ENCODE measurements at regions of chr5 and their contacts with region 1.

Region 1: GRCh38 chr5:93236804-93237421 is 344.1 kb downstream of the NR2F1-AS1 start:
- DNase-seq: no peak
- H3K4me3 ChIP-seq: no peak overlapping the region
- H3K27ac ChIP-seq: no peak overlapping the region
- H3K4me1 ChIP-seq: no peaks in the 10 kb centered on the region
- CTCF ChIP-seq: no peak

Region 2: DNA sequence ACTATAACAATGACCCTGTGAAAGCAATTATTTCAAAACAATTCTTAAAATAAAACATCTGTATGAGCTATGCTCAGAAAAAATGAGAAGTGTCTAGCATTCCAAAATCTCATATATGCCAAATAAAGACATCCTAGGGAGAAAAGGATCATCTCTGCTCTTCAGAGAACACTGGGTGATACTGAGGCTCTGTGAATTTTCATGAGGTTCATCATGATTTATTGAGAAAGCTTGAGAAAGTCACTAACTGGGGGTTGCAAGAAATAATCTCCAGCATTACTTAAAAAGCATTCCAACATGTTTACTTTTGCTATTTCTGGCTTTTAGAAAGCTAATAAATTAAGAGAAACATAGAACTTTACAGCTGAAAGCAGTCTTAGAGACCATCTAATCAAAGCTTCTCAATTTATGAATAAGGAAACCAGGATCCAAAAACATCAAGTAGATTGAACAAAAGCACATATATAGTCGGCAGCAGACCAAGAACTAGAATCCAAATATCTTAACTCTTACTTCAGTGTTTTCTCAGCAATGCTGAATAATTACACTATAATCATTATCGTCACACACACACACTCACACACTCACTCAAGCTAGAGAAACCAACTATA is 28.7 kb before region 1 on chr5:
- CTCF ChIA-PET with region 1: no interaction called
- POLR2A ChIA-PET with region 1: interaction called, 10 read pairs
- intact Hi-C with region 1: no loop called
- DNase-seq: no peak
- H3K4me3 ChIP-seq: no peak overlapping the region
- H3K27ac ChIP-seq: no peak overlapping the region
- H3K4me1 ChIP-seq: no peaks in the 10 kb centered on the region
- CTCF ChIP-seq: no peak

Region 3: DNA sequence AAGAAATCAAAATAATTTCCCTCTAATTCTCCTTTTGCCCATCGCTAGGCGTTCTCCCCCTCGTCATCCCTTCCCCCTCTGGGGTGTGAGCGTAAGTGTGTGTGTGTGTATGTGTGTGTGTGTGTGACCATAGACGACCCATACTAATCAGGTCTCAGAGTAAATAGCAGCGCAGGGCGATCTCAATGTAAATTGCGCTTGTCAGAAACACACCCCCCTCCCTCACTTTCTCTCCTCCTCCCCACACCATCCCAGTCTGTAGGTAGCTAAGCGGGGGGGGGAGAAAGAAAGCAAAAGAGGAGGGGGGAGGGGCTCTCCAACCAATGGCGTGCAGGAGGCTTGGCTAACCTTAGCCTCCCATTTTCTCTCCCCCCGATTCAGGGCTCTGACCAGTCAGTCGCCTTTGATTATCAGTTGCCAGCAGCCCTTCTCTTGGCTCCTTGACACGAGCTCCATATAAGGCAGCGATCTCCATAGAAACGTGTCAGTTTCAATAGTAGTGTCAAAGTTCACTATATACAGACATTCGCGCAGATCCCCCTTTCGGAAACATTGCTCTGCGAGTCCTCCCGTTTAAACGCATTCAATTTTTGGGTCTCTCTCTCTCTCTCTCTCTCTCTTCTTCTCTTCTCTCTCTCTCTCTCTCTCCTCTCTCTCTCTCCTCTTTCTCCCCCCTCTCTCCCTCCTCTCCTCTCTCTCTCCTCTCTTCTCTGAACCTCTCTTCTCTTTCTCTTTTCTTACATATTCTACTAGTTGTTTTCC is 345.9 kb after region 1 on chr5 and contains the start of gene NR2F1:
- CTCF ChIA-PET with region 1: no interaction called
- POLR2A ChIA-PET with region 1: no interaction called
- intact Hi-C with region 1: no loop called
- DNase-seq: no peak
- H3K4me3 ChIP-seq: no peak within 1 kb of the TSS
- H3K27ac ChIP-seq: no peak within 1 kb of the TSS
- H3K4me1 ChIP-seq: no peaks in the 10 kb centered on the region
- CTCF ChIP-seq: no peak
- total RNA-seq, gene NR2F1: not detected in 2 replicates